ENCODE measurements at regions of chr1 and their contacts with region 1.

Region 1: DNA sequence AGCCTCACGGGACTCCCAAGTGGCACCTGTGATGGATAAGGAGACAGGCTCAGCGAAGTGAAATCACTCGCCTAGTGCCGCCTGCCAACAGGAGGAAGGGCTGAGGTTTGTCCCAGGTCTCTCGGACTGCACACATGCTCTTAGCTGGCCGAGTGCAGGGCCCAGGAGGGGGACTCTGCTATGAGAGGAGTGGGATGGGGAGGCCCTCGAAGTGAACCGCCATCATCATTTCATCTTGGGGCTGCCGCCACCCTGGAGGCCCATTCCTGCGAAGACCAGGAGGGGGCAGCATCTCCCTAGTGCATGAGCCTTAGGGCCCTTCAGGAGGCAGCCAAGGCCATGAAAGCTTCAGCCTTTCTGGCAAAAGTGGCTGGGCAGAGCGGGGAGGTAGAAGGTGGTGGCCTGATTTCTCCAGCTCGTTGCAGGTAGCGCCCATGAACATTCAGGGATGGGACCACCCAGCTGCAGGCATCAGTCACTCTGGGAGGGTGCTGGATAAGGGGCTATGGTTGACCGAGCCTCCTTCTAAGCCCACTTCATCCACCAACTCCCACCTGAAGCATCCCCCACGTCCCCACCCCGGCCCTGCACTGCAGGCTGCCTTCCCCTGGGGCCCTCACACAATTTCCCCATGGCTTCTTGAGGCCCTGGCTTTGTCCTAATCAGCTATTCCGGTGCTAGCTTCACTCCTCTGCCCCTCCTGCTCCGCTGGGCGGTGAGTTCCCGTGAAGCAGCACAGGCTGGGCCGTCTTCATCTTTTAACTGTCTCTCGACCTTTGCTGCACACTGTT is 17.2 kb upstream of the RASSF5 start:
- H3K4me3 Mint-ChIP-seq: no peak overlapping the region
- H3K27ac Mint-ChIP-seq: no peak overlapping the region
- H3K4me1 Mint-ChIP-seq: peaks cover 40% of the 10 kb centered on the region
- H3K27me3 Mint-ChIP-seq: peaks cover 3% of the 10 kb centered on the region

Region 2: GRCh38 chr1:206455666-206456344 is 34.4 kb before region 1 on chr1:
- intact Hi-C with region 1: no loop called
- H3K4me3 Mint-ChIP-seq: no peak overlapping the region
- H3K27ac Mint-ChIP-seq: peak overlapping the region; percentile 92
- H3K4me1 Mint-ChIP-seq: peaks cover 38% of the 10 kb centered on the region
- H3K27me3 Mint-ChIP-seq: no peaks in the 10 kb centered on the region

Region 3: DNA sequence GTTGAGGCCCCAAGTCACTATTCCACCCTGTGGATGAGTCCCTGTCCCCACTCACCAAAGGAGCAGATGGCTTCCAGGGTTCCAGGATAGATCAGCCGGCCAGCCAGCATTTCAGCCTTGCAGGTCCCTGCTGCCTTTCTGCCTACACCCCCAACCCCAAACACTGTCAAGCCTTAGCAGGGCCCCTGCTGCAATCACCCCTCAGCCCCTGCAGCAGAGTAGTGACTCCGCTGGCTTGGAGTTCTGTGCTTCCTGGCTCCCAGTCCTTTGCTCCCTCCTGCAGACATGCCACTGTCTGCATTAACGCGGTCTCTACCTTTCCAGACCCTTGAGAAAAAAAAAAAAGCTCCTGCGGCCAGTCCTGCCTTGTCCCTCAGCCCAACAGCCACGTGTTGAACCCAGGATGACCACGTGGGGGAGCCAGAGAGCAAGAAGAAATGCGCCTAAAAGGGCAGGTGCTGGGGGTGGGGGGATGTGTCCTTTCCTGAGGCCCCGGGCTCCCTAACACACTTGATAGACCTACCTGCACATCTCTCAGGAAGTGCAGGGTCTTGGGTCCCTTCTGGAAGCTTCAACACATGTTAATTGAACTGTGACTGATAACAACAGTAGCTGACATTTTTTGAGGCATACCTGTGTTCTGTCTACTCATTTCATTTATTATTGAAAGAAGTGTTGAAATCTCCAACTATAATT is 54.5 kb after region 1 on chr1:
- intact Hi-C with region 1: loop called (anchors 2 kb)
- H3K4me3 Mint-ChIP-seq: no peak overlapping the region
- H3K27ac Mint-ChIP-seq: peak overlapping the region; percentile 55
- H3K4me1 Mint-ChIP-seq: peaks cover 5% of the 10 kb centered on the region
- H3K27me3 Mint-ChIP-seq: peaks cover 5% of the 10 kb centered on the region

Region 4: GRCh38 chr1:206583707-206584648 is 93.8 kb after region 1 on chr1:
- intact Hi-C with region 1: loop called (anchors 2 kb)
- H3K4me3 Mint-ChIP-seq: peak overlapping the region; percentile 59
- H3K27ac Mint-ChIP-seq: peak overlapping the region; percentile 88
- H3K4me1 Mint-ChIP-seq: peaks cover 53% of the 10 kb centered on the region
- H3K27me3 Mint-ChIP-seq: no peaks in the 10 kb centered on the region